CD8-positive, alpha-beta memory T cell (primary cell): ENCODE measurements at regions of chr20 and their contacts with region 1.

Region 1: DNA sequence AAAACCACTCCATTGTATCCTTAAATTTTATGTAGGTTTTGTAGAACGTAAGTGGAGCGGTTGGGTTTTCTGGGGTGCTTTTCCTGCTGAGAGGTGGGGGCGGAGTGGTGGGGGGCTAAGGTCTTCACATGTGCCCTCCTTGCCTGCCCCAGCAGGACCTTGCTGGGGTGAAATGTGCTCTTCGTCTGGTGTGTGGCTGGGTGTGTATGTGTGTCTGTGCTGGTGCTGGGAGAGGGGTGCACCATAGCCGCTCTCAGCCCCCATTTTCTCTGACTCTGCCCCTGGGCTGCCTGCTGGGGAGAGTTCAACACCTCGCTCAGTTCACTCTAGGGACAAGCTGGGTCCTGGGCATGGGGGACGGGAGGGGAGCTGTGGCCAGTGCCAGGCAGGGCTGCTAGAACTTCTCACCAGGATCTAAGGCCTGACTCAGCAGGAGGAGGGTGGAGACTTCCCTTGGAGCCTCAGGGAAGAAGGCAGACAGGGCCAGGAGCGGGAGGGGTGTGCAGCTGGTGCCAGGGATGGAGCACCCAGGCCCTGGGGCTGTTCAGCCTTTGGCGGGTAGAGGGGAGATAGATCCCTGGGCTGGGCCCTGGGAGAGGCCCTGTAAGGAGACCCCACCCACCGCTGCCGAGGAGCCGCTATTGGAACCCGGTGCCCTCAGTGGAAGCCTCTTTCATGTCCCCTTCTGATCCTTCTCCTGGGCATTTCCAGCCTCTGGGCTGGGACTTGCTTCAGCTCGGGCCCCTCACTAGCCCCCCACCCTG is 4.8 kb downstream of the SOX18 start:
- DNase-seq: no peak
- H3K4me3 ChIP-seq: no peak overlapping the region
- H3K4me3 Mint-ChIP-seq: peak overlapping the region in 2 of 7 donors; percentile 46 to 68
- H3K27ac ChIP-seq: no peak overlapping the region
- H3K27ac Mint-ChIP-seq: peak overlapping the region in 3 of 8 donors; percentile 52 to 95 (median 61)
- H3K4me1 ChIP-seq: peaks cover 17% of the 10 kb centered on the region
- H3K4me1 Mint-ChIP-seq: peaks cover 11 to 56% (median 16%) of the 10 kb centered on the region in 3 donors
- H3K27me3 ChIP-seq: peaks cover 5% of the 10 kb centered on the region
- H3K27me3 Mint-ChIP-seq: peaks cover 25 to 29% of the 10 kb centered on the region in 2 donors

Region 2: DNA sequence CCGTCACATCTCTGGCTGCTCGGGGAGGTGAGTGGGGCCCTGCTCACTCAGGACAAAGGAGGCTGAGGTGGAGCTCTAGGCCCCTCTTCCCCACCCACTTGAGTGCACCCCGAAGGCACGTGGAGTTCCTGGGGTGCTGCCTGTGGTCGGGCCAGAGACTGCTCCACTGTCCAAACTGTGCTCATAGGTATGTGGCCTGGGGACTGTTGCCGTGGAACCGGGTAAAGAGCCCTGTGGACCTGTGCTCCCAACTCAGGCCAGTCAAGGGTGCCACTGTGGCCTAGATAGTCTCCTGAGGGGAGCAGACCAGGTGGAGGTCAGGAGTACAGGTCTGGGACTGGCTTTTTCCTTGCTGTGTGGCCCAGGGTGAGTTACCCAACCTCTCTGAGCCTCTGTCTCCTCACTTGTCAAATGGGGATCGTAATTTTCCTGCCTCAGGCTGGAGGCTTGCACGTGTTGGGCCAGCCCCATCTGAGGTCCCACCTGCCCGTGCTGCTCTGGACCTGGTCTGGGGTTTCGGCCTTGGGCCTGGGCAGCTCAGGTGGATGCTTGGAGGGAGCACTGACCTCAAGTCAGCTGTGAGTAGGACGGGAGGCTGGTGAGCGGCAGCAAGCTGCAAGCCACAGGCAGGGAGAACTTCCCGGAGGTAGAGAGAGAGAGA is 75.1 kb after region 1 on chr20:
- CTCF ChIA-PET with region 1: interaction called, 41 read pairs
- POLR2A ChIA-PET with region 1: no interaction called
- DNase-seq: no peak
- H3K4me3 ChIP-seq: peak overlapping the region; percentile 43
- H3K4me3 Mint-ChIP-seq: peak overlapping the region; percentile 47 to 74 (median 70)
- H3K27ac ChIP-seq: no peak overlapping the region
- H3K27ac Mint-ChIP-seq: peak overlapping the region in 5 of 8 donors; percentile 9 to 78 (median 44)
- H3K4me1 ChIP-seq: peaks cover 11% of the 10 kb centered on the region
- H3K4me1 Mint-ChIP-seq: peaks cover 6 to 10% (median 7%) of the 10 kb centered on the region in 3 donors
- H3K27me3 ChIP-seq: no peaks in the 10 kb centered on the region
- H3K27me3 Mint-ChIP-seq: peaks cover 8 to 23% of the 10 kb centered on the region in 2 donors

Region 3: GRCh38 chr20:64145458-64145857 is 100.8 kb after region 1 on chr20:
- CTCF ChIA-PET with region 1: no interaction called
- POLR2A ChIA-PET with region 1: no interaction called
- DNase-seq: no peak
- H3K4me3 ChIP-seq: no peak overlapping the region
- H3K4me3 Mint-ChIP-seq: no peak overlapping the region
- H3K27ac ChIP-seq: no peak overlapping the region
- H3K27ac Mint-ChIP-seq: no peak overlapping the region
- H3K4me1 ChIP-seq: no peaks in the 10 kb centered on the region
- H3K4me1 Mint-ChIP-seq: no peaks in the 10 kb centered on the region
- H3K27me3 ChIP-seq: no peaks in the 10 kb centered on the region
- H3K27me3 Mint-ChIP-seq: peaks cover 14 to 19% of the 10 kb centered on the region in 2 donors